Caco-2 (cell line): ENCODE measurements at regions of chr12 and their contacts with region 1.

Region 1: GRCh38 chr12:520119-520518 is 60.4 kb downstream of the B4GALNT3 start:
- DNase-seq: peak in 1 of 2 experiments; percentile 53
- H3K4me3 ChIP-seq: no peak overlapping the region
- H3K4me3 Mint-ChIP-seq: peak overlapping the region; percentile 7
- H3K27ac Mint-ChIP-seq: peak overlapping the region; percentile 58
- H3K4me1 ChIP-seq: peaks cover 58% of the 10 kb centered on the region
- H3K4me1 Mint-ChIP-seq: peaks cover 37% of the 10 kb centered on the region
- H3K27me3 ChIP-seq: no peaks in the 10 kb centered on the region
- H3K27me3 Mint-ChIP-seq: no peaks in the 10 kb centered on the region
- CTCF ChIP-seq: no peak

Region 2: DNA sequence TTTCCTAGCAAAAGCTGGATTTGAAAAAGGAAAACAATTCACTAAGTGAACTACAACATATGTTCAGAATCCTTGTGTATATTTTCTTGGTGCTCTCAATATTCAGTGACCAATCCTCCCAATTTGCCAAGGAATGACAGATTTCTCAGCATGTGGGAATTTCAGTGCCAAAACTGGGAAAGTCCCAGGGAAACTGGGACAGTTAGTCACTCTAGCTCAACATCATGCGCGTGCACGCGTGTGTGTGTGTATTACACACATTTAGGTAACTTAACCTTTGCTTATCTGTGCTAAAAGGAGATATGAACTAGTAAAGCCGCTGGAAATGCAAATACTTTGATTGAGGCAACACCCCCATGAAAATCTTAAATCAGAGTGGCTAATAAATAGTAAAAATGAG is 231.4 kb before region 1 on chr12:
- CTCF ChIA-PET with region 1: no interaction called
- POLR2A ChIA-PET with region 1: no interaction called
- intact Hi-C with region 1: no loop called
- DNase-seq: no peak
- H3K4me3 ChIP-seq: no peak overlapping the region
- H3K4me3 Mint-ChIP-seq: no peak overlapping the region
- H3K27ac Mint-ChIP-seq: no peak overlapping the region
- H3K4me1 ChIP-seq: no peaks in the 10 kb centered on the region
- H3K4me1 Mint-ChIP-seq: no peaks in the 10 kb centered on the region
- H3K27me3 ChIP-seq: no peaks in the 10 kb centered on the region
- H3K27me3 Mint-ChIP-seq: no peaks in the 10 kb centered on the region
- CTCF ChIP-seq: no peak

Region 3: DNA sequence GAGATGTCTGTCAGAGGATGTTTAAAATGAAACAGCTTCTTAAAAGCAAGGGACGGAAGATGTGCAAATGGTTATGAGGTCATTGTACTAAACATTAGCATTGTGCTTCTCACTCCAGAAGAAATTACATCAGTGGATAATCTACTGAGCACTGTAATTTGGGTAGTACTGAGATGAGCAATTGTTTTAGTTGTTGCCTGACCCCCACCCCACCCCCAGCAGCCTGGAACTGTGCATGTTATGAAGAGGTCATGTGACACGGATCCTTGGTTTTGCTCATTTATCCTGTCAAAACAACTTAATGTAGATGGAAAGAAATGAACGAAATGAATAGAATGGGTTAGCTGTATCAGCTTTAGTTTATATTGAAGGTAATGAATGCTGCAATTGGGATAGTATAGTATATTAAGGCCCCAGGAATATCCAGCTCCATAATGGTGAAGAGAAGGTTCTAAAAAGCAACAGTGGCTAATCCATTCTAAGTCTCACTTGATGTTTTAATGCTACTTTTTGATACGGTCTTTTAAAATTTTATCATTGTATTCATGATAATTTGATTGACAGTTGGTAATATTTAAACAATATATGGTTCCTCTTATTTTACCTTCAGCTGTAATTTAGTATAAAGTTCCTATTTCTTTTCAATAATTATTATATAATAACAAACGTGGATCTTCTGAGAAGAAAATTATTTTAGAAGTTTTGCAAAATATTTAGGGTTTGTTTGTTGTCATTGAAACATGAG is 290.7 kb after region 1 on chr12:
- CTCF ChIA-PET with region 1: interaction called, 11 read pairs
- POLR2A ChIA-PET with region 1: no interaction called
- intact Hi-C with region 1: no loop called
- DNase-seq: no peak
- H3K4me3 ChIP-seq: no peak overlapping the region
- H3K4me3 Mint-ChIP-seq: no peak overlapping the region
- H3K27ac Mint-ChIP-seq: no peak overlapping the region
- H3K4me1 ChIP-seq: peaks cover 9% of the 10 kb centered on the region
- H3K4me1 Mint-ChIP-seq: peaks cover 17% of the 10 kb centered on the region
- H3K27me3 ChIP-seq: no peaks in the 10 kb centered on the region
- H3K27me3 Mint-ChIP-seq: no peaks in the 10 kb centered on the region
- CTCF ChIP-seq: no peak

Region 4: GRCh38 chr12:879641-880040 is 359.5 kb after region 1 on chr12:
- CTCF ChIA-PET with region 1: no interaction called
- POLR2A ChIA-PET with region 1: no interaction called
- intact Hi-C with region 1: no loop called
- DNase-seq: no peak
- H3K4me3 ChIP-seq: no peak overlapping the region
- H3K4me3 Mint-ChIP-seq: no peak overlapping the region
- H3K27ac Mint-ChIP-seq: no peak overlapping the region
- H3K4me1 ChIP-seq: no peaks in the 10 kb centered on the region
- H3K4me1 Mint-ChIP-seq: no peaks in the 10 kb centered on the region
- H3K27me3 ChIP-seq: no peaks in the 10 kb centered on the region
- H3K27me3 Mint-ChIP-seq: no peaks in the 10 kb centered on the region
- CTCF ChIP-seq: no peak